Heart right ventricle (tissue), 16 donors: ENCODE measurements at regions of chr10 and their contacts with region 1.

Region 1: GRCh38 chr10:63268798-63269503 is 135.8 kb downstream of the NRBF2 start:
- DNase-seq: peak; percentile 21 to 93
- ATAC-seq: peak; percentile 94 to 99 (median 96)
- H3K4me3 ChIP-seq: peak overlapping the region; percentile 41 to 66 (median 59)
- H3K27ac ChIP-seq: peak overlapping the region; percentile 83 to 95 (median 89)
- H3K4me1 ChIP-seq: peaks cover 0 to 40% (median 23%) of the 10 kb centered on the region in 9 donors
- H3K27me3 ChIP-seq: no peaks in the 10 kb centered on the region
- CTCF ChIP-seq: peak in 6 of 9 donors; percentile 24 to 55 (median 46)

Region 2: GRCh38 chr10:63206997-63207811 is 61.7 kb before region 1 on chr10:
- intact Hi-C with region 1: loop called in 2 of 10 experiments (anchors 5 to 10 kb)
- DNase-seq: peak in 1 of 2 donors; percentile 51
- ATAC-seq: peak; percentile 66 to 83 (median 80)
- H3K4me3 ChIP-seq: peak overlapping the region in 4 of 10 donors; percentile 9 to 26 (median 18)
- H3K27ac ChIP-seq: peak overlapping the region; percentile 7 to 80 (median 74)
- H3K4me1 ChIP-seq: peaks cover 0 to 78% (median 72%) of the 10 kb centered on the region in 9 donors
- H3K27me3 ChIP-seq: no peaks in the 10 kb centered on the region
- CTCF ChIP-seq: no peak

Region 3: GRCh38 chr10:63217120-63217605 is 51.8 kb before region 1 on chr10:
- intact Hi-C with region 1: loop called in 7 of 10 experiments (anchors 2 to 10 kb)
- DNase-seq: peak in 1 of 2 donors; percentile 30
- ATAC-seq: peak; percentile 62 to 82 (median 77)
- H3K4me3 ChIP-seq: no peak overlapping the region
- H3K27ac ChIP-seq: peak overlapping the region in 4 of 10 donors; percentile 1 to 40 (median 14)
- H3K4me1 ChIP-seq: peaks cover 0 to 63% (median 43%) of the 10 kb centered on the region in 9 donors
- H3K27me3 ChIP-seq: no peaks in the 10 kb centered on the region
- CTCF ChIP-seq: peak; percentile 46 to 86 (median 70)

Region 4: DNA sequence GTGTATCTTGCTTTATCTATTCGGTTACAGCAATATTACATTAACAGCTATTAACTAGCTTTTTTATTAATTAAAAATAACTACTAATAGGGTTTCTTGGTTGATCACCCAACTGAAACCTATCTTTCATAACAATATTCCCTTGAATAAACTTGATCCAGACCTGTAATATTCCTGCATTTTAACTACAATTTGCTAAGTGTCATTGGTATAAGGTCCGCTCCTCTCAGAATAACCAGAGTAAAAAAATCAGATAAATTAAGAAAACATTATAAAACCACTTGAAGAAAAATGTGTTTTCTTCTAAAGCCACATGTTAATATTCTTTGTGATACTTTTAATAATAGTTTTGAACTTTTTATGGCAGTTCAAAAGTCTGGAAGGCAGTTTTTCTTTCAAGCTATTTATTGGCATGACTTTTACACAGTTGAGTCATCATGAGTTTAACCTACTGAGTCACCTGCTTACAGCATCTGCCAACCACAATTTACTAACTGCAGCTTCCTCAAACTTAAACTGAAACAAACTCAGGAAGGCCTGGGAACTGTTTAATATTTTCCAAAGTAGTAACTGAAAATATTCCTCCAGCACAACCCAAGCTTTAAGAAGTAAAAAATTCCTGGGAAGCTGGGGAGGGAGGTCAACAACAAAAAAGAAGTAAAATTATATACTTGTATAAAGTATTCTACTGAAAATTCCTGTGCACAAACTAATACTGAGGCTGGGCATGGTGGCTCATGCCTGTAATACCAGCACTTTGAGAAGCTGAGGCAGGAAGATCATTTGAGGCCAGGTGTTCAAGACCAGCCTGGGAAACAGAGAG is 32.6 kb before region 1 on chr10:
- intact Hi-C with region 1: loop called in 1 of 10 experiments (anchors 5 kb)
- DNase-seq: no peak
- ATAC-seq: peak in 6 of 8 donors; percentile 52 to 95 (median 81)
- H3K4me3 ChIP-seq: peak overlapping the region in 1 of 10 donors; percentile 0
- H3K27ac ChIP-seq: peak overlapping the region in 8 of 10 donors; percentile 20 to 82 (median 52)
- H3K4me1 ChIP-seq: peaks cover 0 to 79% (median 47%) of the 10 kb centered on the region in 9 donors
- H3K27me3 ChIP-seq: no peaks in the 10 kb centered on the region
- CTCF ChIP-seq: no peak

Region 5: DNA sequence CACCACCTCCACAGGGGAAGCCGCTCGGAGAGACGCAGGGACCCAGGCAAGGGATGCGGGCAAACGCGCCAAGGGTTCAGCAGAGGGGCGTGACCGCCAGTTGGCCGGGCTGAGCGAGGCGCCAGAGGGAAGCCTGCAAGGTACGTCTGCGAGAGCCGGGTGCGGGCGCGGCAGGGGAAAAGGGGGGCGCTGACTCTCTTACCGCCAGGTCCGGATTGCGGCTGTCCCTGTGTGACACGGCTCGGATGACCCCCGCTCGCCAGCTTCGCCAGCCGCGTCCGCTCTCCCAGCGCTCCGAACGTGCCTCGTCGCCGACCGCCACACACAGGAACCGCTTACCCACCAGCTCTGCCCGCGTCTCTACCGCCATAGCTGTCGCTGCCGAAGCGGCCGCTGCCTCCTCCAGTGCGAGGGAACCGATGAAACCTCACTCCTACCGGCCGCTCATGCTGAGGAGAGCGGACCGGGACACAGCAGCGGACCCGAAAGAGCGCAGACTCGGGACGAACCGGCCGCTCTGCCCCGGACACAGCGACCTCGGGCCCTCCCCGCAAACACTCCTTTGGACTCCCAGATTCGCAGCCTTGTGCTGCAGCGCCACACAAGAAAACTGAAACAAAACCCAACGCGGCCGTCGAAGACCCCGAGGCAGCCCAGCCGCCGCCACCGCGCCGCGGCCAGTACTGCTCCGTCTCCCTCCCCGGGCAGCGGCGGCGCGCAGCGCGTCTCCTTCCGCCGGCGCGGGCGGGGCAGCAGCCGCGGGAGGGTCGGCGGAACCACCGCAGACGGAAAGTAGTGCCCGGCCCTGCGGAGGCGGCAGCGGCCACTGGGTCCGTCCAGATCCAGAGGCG is 196.6 kb after region 1 on chr10 and contains the start of gene JMJD1C:
- intact Hi-C with region 1: loop called in 5 of 10 experiments (anchors 1 to 10 kb)
- DNase-seq: peak; percentile 76 to 84
- ATAC-seq: peak; percentile 91 to 97 (median 94)
- H3K4me3 ChIP-seq: peak within 1 kb of the TSS; percentile 77 to 86 (median 84)
- H3K27ac ChIP-seq: peak within 1 kb of the TSS; percentile 73 to 97 (median 93)
- H3K4me1 ChIP-seq: peaks cover 0 to 40% (median 28%) of the 10 kb centered on the region in 9 donors
- H3K27me3 ChIP-seq: no peaks in the 10 kb centered on the region
- CTCF ChIP-seq: peak in 1 of 9 donors; percentile 9
- total RNA-seq, gene JMJD1C: 30.9 to 51.9 (median 39.2) TPM

Region 6: DNA sequence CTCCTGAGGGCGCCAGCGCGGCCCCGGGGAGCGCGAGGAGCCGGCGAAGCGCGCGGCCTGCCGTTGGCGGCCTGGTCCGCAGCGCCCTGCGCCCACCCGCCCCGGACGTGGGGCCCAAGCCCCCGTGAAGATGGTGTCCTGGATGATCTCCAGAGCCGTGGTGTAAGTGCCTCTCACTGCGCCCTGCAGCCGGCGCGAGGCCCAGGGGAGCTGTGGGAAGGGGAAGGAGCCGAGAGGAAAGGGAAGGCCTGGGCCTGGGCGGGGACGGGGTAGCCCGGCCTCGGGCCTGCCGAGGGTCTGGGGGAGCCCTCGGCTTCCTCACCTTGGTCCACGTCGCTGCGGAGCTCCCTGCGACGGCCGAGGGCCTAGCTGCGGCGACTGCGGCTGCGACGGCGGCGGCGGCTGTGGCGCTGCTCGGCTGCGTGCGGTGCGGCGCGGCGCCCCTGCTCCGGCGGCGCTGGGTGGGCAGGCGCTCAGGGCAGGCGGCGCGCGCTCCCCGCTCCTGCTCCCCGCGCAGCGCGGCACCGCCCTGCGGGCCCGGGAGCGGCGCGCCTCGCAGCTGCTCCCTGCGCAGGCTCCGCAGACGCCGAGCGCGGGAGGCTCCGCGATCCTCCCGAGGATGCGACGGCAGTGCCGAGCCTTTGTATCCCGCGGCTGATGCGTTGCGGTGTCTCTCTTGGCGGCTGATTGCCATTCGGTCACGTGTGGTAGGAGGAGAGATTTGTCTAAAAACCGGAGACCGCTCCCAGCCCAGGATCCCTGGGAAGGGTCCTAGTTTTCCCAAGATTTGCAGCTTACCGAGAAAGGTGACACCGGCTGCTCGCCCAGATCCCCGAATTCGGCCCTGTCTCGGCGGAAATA is 252.7 kb after region 1 on chr10:
- intact Hi-C with region 1: loop called in 3 of 10 experiments (anchors 5 to 10 kb)
- DNase-seq: peak; percentile 68 to 72
- ATAC-seq: peak; percentile 70 to 91 (median 86)
- H3K4me3 ChIP-seq: peak overlapping the region; percentile 51 to 91 (median 80)
- H3K27ac ChIP-seq: peak overlapping the region; percentile 97 to 99 (median 99)
- H3K4me1 ChIP-seq: peaks cover 0 to 80% (median 58%) of the 10 kb centered on the region in 9 donors
- H3K27me3 ChIP-seq: no peaks in the 10 kb centered on the region
- CTCF ChIP-seq: no peak

Region 7: DNA sequence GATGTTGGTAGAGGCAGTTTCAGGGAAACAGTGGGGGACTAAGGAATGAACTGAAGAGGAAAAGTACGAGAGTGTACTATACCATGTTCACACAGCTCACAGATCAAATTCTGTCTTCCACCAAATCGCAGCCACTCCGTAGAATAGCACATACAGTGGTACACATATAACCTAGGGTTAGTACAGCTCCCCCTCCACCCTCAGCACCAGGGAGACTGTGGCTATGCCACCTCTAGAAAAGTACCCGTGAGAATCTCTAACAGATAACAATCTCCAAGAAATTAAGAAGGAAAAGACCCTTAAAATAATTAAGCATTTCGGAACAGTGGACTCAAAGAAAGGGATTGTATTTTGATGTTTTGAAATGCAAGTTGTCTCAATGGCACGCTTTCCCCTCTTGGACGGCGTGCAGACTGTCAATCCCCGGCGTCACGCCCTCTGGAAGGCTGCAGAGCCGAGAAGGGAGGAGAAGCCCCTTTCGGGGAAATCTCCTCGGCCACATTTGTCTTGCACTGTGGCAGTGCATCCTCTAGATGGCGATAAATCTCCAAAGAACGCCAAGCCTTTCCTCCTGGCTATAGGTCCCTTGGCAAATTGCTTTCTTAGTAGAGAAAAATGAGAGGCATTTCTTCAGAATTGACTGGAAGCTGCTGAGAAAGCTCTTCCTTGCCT is 597.3 kb after region 1 on chr10:
- intact Hi-C with region 1: no loop called
- DNase-seq: peak; percentile 21 to 25
- ATAC-seq: peak in 7 of 8 donors; percentile 43 to 79 (median 61)
- H3K4me3 ChIP-seq: peak overlapping the region in 3 of 10 donors; percentile 8 to 15 (median 11)
- H3K27ac ChIP-seq: no peak overlapping the region
- H3K4me1 ChIP-seq: peaks cover 0 to 13% (median 9%) of the 10 kb centered on the region in 9 donors
- H3K27me3 ChIP-seq: peaks cover 0 to 38% (median 23%) of the 10 kb centered on the region in 7 donors
- CTCF ChIP-seq: peak; percentile 48 to 87 (median 82)